HCT116 (cell line): ENCODE measurements at regions of chr20 and their contacts with region 1.

Region 1: DNA sequence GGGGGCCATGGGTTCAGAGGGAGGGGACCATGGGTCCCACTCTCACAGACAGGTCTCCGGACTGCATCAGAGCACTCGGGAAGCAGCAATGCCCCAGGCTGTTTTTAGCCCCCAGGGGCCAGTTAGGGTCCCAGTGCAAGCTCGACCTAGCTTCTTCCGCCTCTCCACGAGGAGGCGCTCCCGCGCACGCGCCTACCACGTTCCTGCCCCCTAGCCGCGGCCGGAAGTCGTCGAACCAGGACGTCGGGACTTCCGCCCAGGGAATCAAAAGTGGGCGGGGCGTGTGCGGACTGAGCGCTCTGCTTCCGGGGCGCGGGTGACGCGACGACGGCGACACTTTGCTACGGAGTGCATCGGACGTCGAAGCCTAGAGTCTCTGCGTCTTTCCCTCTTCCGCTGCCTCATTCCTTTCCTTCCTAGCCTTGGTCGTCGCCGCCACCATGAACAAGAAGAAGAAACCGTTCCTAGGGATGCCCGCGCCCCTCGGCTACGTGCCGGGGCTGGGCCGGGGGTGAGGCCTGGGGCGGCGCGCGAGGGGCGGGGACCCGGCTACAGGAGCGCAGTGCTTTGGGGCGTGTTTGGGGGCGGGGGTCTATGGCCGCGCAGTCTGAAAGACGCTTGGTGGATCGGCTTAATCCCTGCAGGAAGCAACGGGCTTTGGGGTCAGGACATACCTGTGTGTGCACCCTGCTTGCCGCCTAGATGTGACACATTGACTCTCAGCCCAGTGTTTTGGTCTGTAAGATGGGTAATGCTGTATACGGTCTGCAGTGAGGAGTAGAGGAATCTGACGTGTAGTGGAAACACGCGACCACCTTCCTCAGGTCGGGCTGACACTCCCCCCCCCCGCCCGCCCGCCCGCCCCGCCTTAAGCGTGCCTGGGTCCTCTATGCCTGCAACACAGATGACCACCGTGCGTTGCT is at the start of gene PRPF6:
- DNase-seq: peak; percentile 91
- ATAC-seq: peak; percentile 78
- H3K4me3 ChIP-seq: peak within 1 kb of the TSS; percentile 94 to 98
- H3K27ac ChIP-seq: peak within 1 kb of the TSS; percentile 69
- H3K4me1 ChIP-seq: peaks cover 22 to 45% of the 10 kb centered on the region in 2 experiments
- H3K27me3 ChIP-seq: no peaks in the 10 kb centered on the region
- CTCF ChIP-seq: peak in 2 of 3 experiments; percentile 82 to 91; a peak in 4 of 6 replicates
- POLR2A ChIP-seq: no peak
- RAD21 ChIP-seq: no peak
- total RNA-seq, gene PRPF6: 74.9 TPM

Region 2: GRCh38 chr20:63628246-63628975 is 352.7 kb before region 1 on chr20:
- CTCF ChIA-PET with region 1: no interaction called
- POLR2A ChIA-PET with region 1: no interaction called
- RAD21 ChIA-PET with region 1: no interaction called
- intact Hi-C with region 1: no loop called
- DNase-seq: peak; percentile 75
- ATAC-seq: peak; percentile 73
- H3K4me3 ChIP-seq: peak overlapping the region; percentile 88 to 96
- H3K27ac ChIP-seq: peak overlapping the region; percentile 98
- H3K4me1 ChIP-seq: peaks cover 8 to 22% of the 10 kb centered on the region in 2 experiments
- H3K27me3 ChIP-seq: no peaks in the 10 kb centered on the region
- CTCF ChIP-seq: no peak
- POLR2A ChIP-seq: peak; percentile 70
- RAD21 ChIP-seq: no peak

Region 3: GRCh38 chr20:63682384-63683139 is 298.5 kb before region 1 on chr20:
- CTCF ChIA-PET with region 1: no interaction called
- POLR2A ChIA-PET with region 1: no interaction called
- RAD21 ChIA-PET with region 1: no interaction called
- intact Hi-C with region 1: no loop called
- DNase-seq: peak; percentile 97
- ATAC-seq: peak; percentile 91
- H3K4me3 ChIP-seq: peak overlapping the region; percentile 24 to 51
- H3K27ac ChIP-seq: peak overlapping the region; percentile 100
- H3K4me1 ChIP-seq: peaks cover 59 to 71% of the 10 kb centered on the region in 2 experiments
- H3K27me3 ChIP-seq: no peaks in the 10 kb centered on the region
- CTCF ChIP-seq: no peak
- POLR2A ChIP-seq: peak; percentile 49
- RAD21 ChIP-seq: no peak

Region 4: GRCh38 chr20:63955827-63956663 is 25.0 kb before region 1 on chr20 and contains the start of gene UCKL1:
- CTCF ChIA-PET with region 1: interaction called, 4 read pairs
- POLR2A ChIA-PET with region 1: interaction called, 4 read pairs
- RAD21 ChIA-PET with region 1: no interaction called
- intact Hi-C with region 1: loop called (anchors 2 kb)
- DNase-seq: peak; percentile 79
- ATAC-seq: peak; percentile 75
- H3K4me3 ChIP-seq: peak within 1 kb of the TSS; percentile 90 to 96
- H3K27ac ChIP-seq: peak within 1 kb of the TSS; percentile 99
- H3K4me1 ChIP-seq: peaks cover 17 to 60% of the 10 kb centered on the region in 2 experiments; a peak in 3 of 4 replicates
- H3K27me3 ChIP-seq: no peaks in the 10 kb centered on the region
- CTCF ChIP-seq: no peak
- POLR2A ChIP-seq: no peak
- RAD21 ChIP-seq: no peak
- total RNA-seq, gene UCKL1: 54.2 TPM

Region 5: DNA sequence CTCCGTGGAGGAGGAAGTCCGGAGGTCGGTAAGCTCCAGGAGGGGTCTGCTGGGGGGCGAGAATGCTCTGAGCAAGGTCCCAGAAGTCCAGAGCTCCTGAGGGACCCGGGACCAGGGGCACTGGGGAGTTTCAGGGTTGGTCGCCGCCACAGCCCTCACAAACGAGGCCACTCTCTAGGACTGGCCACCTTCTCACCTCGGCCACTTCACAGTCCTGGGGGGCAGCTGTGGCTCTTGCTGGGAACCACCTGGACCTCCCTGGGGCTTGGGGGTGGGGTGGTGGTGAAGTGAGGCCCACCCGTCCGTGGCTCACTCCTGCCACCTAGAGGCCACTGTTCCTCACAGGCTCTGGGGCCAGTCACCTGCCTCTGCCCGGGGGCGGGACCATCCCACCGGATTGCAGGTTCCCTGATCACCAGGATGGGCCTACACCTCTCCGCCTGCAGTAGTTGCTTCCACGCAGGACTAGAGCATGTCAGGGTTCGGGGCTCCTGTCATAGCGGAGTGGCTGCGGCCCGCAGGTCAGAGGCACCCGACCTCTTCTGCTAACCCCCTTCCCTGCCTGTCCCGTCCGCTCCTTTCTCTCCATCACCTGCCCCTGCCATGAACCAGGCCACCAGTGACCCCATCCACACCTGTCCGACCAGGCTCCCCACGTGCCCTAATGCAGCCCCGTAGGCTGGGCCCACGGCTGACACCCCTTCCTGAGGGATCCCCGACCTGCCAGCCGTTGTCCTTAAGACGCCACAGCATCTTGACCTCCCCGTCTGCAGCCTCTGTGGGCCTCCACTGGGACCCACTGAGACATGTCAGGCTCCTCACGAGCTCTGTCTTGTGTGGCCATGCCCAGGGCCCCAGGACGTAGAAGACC is 76.8 kb after region 1 on chr20:
- CTCF ChIA-PET with region 1: interaction called, 13 read pairs
- POLR2A ChIA-PET with region 1: interaction called, 4 read pairs
- RAD21 ChIA-PET with region 1: no interaction called
- intact Hi-C with region 1: loop called (anchors 2 kb)
- DNase-seq: no peak
- ATAC-seq: peak; percentile 87
- H3K4me3 ChIP-seq: no peak overlapping the region
- H3K27ac ChIP-seq: no peak overlapping the region; the same call in 1 of the 2 replicates
- H3K4me1 ChIP-seq: peaks cover 12 to 42% of the 10 kb centered on the region in 2 experiments; a peak in 3 of 4 replicates
- H3K27me3 ChIP-seq: no peaks in the 10 kb centered on the region
- CTCF ChIP-seq: peak in 2 of 3 experiments; percentile 85 to 93; a peak in 4 of 6 replicates
- POLR2A ChIP-seq: no peak
- RAD21 ChIP-seq: no peak

Region 6: DNA sequence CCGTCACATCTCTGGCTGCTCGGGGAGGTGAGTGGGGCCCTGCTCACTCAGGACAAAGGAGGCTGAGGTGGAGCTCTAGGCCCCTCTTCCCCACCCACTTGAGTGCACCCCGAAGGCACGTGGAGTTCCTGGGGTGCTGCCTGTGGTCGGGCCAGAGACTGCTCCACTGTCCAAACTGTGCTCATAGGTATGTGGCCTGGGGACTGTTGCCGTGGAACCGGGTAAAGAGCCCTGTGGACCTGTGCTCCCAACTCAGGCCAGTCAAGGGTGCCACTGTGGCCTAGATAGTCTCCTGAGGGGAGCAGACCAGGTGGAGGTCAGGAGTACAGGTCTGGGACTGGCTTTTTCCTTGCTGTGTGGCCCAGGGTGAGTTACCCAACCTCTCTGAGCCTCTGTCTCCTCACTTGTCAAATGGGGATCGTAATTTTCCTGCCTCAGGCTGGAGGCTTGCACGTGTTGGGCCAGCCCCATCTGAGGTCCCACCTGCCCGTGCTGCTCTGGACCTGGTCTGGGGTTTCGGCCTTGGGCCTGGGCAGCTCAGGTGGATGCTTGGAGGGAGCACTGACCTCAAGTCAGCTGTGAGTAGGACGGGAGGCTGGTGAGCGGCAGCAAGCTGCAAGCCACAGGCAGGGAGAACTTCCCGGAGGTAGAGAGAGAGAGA is 138.7 kb after region 1 on chr20:
- CTCF ChIA-PET with region 1: interaction called, 3 read pairs
- POLR2A ChIA-PET with region 1: no interaction called
- RAD21 ChIA-PET with region 1: no interaction called
- intact Hi-C with region 1: loop called (anchors 2 kb)
- DNase-seq: peak; percentile 6
- ATAC-seq: peak; percentile 51
- H3K4me3 ChIP-seq: no peak overlapping the region
- H3K27ac ChIP-seq: no peak overlapping the region; the same call in 1 of the 2 replicates
- H3K4me1 ChIP-seq: peaks cover 0 to 8% of the 10 kb centered on the region in 2 experiments; a peak in 2 of 4 replicates
- H3K27me3 ChIP-seq: no peaks in the 10 kb centered on the region
- CTCF ChIP-seq: no peak
- POLR2A ChIP-seq: no peak
- RAD21 ChIP-seq: no peak